MCF 10A (cell line): ENCODE measurements at regions of chr1 and their contacts with region 1.

Region 1: GRCh38 chr1:29181413-29182225 is at the start of gene SRSF4:
- DNase-seq: peak; percentile 97
- H3K4me3 Mint-ChIP-seq: peak within 1 kb of the TSS; percentile 86
- H3K27ac Mint-ChIP-seq: peak within 1 kb of the TSS; percentile 94
- H3K4me1 Mint-ChIP-seq: peaks cover 24% of the 10 kb centered on the region
- H3K27me3 Mint-ChIP-seq: no peaks in the 10 kb centered on the region
- CTCF ChIP-seq: peak; percentile 73
- total RNA-seq, gene SRSF4: 95.8 and 97.9 TPM in 2 replicates

Region 2: DNA sequence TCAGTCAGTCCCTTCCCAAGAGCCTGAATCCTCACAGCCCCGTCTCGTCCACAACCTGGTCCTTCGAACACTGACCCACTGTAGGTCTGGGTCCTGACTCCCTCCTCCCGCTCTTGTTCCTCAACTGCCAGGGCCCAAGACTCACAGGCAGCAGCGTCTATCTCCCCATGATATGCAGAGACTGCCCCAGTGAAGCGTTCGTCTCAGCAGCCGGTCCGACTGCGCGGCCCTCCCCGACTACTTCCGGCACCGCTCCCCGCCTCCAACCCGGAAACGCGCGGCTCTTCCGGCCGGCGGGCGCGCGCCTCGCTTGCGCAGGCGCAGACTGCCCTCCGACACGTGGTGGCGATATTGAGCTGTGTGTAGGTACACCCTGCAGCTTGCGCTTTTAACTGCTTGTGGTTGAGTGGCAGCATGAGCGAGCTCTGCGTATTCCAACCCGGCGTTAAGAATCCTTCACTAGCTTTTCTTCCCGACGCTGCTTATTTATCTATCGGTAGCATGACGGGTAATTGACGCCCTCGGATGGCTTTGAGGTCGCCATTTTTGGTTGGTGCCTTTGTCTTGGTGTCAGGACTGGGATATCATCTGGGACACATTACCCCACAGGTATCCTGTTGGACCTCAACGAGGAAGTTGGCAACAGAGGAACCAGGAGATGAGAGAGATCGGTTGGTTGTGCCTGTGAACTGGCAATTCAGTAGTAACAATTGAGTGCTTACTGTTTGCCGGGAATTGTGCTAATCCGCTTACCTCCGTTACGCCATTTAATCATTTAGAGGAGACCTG is 538.6 kb before region 1 on chr1 and contains the start of gene TAF12:
- CTCF ChIA-PET with region 1: no interaction called
- POLR2A ChIA-PET with region 1: interaction called, 12 read pairs
- intact Hi-C with region 1: loop called (anchors 10 kb)
- DNase-seq: peak; percentile 95
- H3K4me3 Mint-ChIP-seq: peak within 1 kb of the TSS; percentile 100
- H3K27ac Mint-ChIP-seq: peak within 1 kb of the TSS; percentile 98
- H3K4me1 Mint-ChIP-seq: peaks cover 18% of the 10 kb centered on the region
- H3K27me3 Mint-ChIP-seq: no peaks in the 10 kb centered on the region
- CTCF ChIP-seq: peak; percentile 31
- total RNA-seq, gene TAF12: 29.7 and 40.9 TPM in 2 replicates

Region 3: GRCh38 chr1:28775121-28775944 is 406.3 kb before region 1 on chr1:
- CTCF ChIA-PET with region 1: no interaction called
- POLR2A ChIA-PET with region 1: no interaction called
- intact Hi-C with region 1: no loop called
- DNase-seq: peak; percentile 45
- H3K4me3 Mint-ChIP-seq: peak overlapping the region; percentile 64
- H3K27ac Mint-ChIP-seq: no peak overlapping the region
- H3K4me1 Mint-ChIP-seq: no peaks in the 10 kb centered on the region
- H3K27me3 Mint-ChIP-seq: no peaks in the 10 kb centered on the region
- CTCF ChIP-seq: no peak

Region 4: DNA sequence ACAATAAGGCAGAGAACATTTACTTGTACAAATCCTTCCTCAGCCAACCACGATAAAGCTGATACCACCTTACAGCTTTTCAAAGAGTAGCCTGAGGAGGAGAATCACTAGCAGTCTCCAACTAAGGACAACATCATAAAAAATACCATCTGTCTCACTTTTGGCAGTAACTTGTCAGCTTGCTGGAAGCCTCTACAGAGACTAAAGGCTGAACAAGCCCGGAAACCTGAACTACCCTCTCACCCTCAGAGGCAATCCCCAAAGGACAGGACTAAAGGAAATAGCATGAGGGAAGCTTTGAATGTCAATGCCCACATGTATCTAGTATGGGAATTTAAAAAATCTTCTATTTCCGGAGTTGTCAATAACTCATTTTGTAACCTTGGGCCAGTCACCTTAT is 10.5 kb before region 1 on chr1:
- CTCF ChIA-PET with region 1: interaction called, 4 read pairs
- POLR2A ChIA-PET with region 1: interaction called, 29 read pairs
- intact Hi-C with region 1: no loop called
- DNase-seq: no peak
- H3K4me3 Mint-ChIP-seq: no peak overlapping the region
- H3K27ac Mint-ChIP-seq: peak overlapping the region; percentile 78
- H3K4me1 Mint-ChIP-seq: peaks cover 20% of the 10 kb centered on the region
- H3K27me3 Mint-ChIP-seq: no peaks in the 10 kb centered on the region
- CTCF ChIP-seq: no peak

Region 5: DNA sequence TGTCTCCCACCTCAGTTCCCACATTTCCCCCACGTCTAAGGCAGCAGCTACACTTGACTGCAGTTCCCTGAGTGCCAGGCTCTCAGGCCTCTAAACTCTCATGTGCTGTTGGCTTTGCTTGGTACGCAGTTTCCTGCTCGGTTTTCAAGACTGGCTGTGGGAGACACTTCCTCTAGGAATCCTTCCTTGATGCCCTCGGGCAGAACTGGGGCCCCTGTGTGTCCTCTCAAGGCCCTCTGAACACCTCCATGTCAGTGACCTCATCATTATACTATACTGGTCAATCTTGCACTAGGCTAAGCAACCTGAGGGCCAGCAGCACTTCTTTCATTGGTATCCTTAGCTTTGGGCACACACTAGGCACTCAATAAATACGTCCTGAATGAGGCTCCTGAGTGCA is 10.6 kb after region 1 on chr1:
- CTCF ChIA-PET with region 1: interaction called, 71 read pairs
- POLR2A ChIA-PET with region 1: interaction called, 29 read pairs
- intact Hi-C with region 1: no loop called
- DNase-seq: no peak
- H3K4me3 Mint-ChIP-seq: no peak overlapping the region
- H3K27ac Mint-ChIP-seq: no peak overlapping the region
- H3K4me1 Mint-ChIP-seq: peaks cover 9% of the 10 kb centered on the region
- H3K27me3 Mint-ChIP-seq: no peaks in the 10 kb centered on the region
- CTCF ChIP-seq: no peak

Region 6: DNA sequence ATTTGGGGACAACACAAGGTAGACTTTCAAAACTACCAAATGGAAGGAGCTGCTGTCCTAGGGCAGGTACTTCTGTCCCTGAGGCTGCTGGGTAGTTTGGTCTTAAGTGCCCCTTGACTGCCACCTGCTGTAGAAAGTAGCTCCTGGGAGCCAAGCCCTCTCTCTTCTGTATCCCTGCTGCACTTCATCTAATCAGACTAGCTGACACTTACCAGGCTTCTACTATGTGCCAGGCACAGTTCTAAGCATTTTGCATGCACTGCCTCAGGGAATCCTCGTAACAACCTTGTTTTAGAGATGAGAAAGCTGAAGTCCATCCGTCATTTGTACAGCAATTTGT is 15.9 kb after region 1 on chr1:
- CTCF ChIA-PET with region 1: interaction called, 71 read pairs
- POLR2A ChIA-PET with region 1: interaction called, 60 read pairs
- intact Hi-C with region 1: no loop called
- DNase-seq: peak; percentile 66
- H3K4me3 Mint-ChIP-seq: no peak overlapping the region
- H3K27ac Mint-ChIP-seq: no peak overlapping the region
- H3K4me1 Mint-ChIP-seq: peaks cover 5% of the 10 kb centered on the region
- H3K27me3 Mint-ChIP-seq: no peaks in the 10 kb centered on the region
- CTCF ChIP-seq: peak; percentile 25

Region 7: DNA sequence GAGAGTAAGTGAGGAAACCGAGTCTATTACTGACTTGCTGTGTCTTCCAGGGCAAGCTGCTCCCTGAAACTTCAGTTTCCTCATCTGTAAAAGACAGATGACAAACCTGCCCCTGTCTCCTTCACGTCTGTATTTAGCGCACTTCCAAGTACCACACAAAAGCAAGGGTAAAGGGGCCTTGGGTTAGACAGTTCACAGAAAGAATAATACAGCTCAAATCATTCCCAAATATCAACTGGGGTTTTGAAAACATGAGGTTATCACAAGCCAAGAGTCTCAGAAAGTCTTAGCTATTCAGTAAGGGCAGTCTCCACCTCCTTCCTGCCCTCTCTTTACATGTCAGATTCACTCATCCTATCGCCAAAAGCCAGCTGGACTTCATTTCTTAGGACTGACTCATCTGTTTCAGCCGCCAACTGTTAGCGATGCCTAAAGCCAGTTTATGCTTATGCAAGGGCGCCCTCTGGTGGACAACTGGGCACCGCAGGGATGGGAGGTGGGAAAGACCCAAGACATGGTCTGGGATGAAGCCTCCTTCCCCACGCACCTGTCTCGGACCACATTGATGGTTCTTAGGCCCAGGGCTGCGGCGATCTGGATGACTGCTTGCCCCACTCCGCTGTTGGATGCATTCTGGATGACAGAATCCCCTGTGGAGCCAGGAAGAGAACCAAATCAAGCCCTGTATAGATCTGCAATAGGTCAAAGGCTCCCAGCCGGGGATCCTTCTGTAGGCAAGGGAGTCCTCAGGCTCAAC is 21.1 kb after region 1 on chr1:
- CTCF ChIA-PET with region 1: interaction called, 71 read pairs
- POLR2A ChIA-PET with region 1: interaction called, 60 read pairs
- intact Hi-C with region 1: loop called (anchors 1 kb)
- DNase-seq: peak; percentile 98
- H3K4me3 Mint-ChIP-seq: no peak overlapping the region
- H3K27ac Mint-ChIP-seq: peak overlapping the region; percentile 46
- H3K4me1 Mint-ChIP-seq: peaks cover 7% of the 10 kb centered on the region
- H3K27me3 Mint-ChIP-seq: no peaks in the 10 kb centered on the region
- CTCF ChIP-seq: peak; percentile 85

Region 8: GRCh38 chr1:29230553-29231378 is 49.1 kb after region 1 on chr1 and contains the start of gene MECR:
- CTCF ChIA-PET with region 1: no interaction called
- POLR2A ChIA-PET with region 1: interaction called, 18 read pairs
- intact Hi-C with region 1: no loop called
- DNase-seq: peak; percentile 90
- H3K4me3 Mint-ChIP-seq: peak within 1 kb of the TSS; percentile 90
- H3K27ac Mint-ChIP-seq: peak within 1 kb of the TSS; percentile 96
- H3K4me1 Mint-ChIP-seq: peaks cover 11% of the 10 kb centered on the region
- H3K27me3 Mint-ChIP-seq: peaks cover 14% of the 10 kb centered on the region
- CTCF ChIP-seq: peak; percentile 11
- total RNA-seq, gene MECR: 46.2 and 59.1 TPM in 2 replicates